ENCODE measurements at regions of chr19 and their contacts with region 1.

Region 1: DNA sequence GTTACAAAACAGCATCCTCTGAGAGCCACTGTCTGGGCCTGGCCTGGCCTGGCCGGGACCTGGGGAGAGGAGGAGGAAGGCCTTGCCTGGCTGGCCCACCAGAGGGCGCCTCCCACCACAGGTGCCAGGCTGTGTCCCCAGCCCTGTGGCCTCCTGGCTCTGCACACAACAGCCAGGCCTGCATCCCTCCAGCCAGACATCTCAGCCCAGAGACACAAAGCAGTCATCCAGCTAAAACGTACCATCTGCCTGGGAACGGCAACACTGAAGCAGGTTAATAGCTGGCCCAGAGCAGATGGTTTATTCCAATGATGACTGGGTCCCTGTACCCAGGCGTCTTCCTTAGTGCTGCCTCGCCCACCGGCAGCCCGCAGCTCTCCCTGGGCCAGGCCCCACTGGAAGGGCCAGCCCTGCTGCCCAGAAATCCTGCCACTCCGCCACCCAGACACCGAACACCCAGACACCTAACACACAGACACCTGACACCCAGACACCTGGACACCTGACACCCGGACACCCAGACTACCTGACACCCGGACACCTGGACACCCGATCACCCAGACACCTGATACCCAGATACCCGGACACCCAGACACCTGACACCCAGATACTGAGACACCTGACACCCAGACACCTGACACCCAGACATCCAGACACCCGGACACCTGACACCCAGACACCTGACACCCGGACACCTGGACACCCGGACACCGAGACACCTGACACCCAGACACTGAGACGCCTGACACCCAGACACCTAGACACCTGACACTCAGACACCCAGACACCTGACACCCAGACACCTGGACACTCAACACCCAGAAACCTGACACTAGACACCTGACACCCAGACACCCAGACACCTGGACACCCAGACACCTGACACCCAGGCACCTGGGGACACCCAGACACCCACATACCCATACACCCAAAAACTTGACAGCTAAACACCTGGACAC is 20.1 kb downstream of the C19orf12 start:
- DNase-seq: peak; percentile 73 to 90 (median 80)
- ATAC-seq: peak; percentile 95
- H3K4me3 ChIP-seq: no peak overlapping the region
- H3K4me3 Mint-ChIP-seq: no peak overlapping the region
- H3K27ac ChIP-seq: no peak overlapping the region
- H3K27ac Mint-ChIP-seq: peak overlapping the region; percentile 61
- H3K4me1 ChIP-seq: peaks cover 24% of the 10 kb centered on the region
- H3K4me1 Mint-ChIP-seq: peaks cover 18% of the 10 kb centered on the region
- H3K27me3 ChIP-seq: no peaks in the 10 kb centered on the region
- H3K27me3 Mint-ChIP-seq: no peaks in the 10 kb centered on the region
- CTCF ChIP-seq: peak; percentile 92

Region 2: GRCh38 chr19:29467824-29468401 is 227.0 kb before region 1 on chr19:
- CTCF ChIA-PET with region 1: no interaction called
- POLR2A ChIA-PET with region 1: no interaction called
- intact Hi-C with region 1: loop called in 1 of 2 experiments (anchors 10 kb)
- DNase-seq: peak in 3 of 14 experiments; percentile 15 to 40 (median 20)
- ATAC-seq: no peak
- H3K4me3 ChIP-seq: no peak overlapping the region
- H3K4me3 Mint-ChIP-seq: no peak overlapping the region
- H3K27ac ChIP-seq: no peak overlapping the region
- H3K27ac Mint-ChIP-seq: no peak overlapping the region
- H3K4me1 ChIP-seq: no peaks in the 10 kb centered on the region
- H3K4me1 Mint-ChIP-seq: no peaks in the 10 kb centered on the region
- H3K27me3 ChIP-seq: peaks cover 0 to 4% of the 10 kb centered on the region in 2 experiments
- H3K27me3 Mint-ChIP-seq: peaks cover 29% of the 10 kb centered on the region
- CTCF ChIP-seq: no peak

Measured in CD4-positive, alpha-beta T cell (primary cell).